ENCODE measurements at regions of chr2 and their contacts with region 1.

Region 1: GRCh38 chr2:168118733-168119514 is 128.5 kb downstream of the STK39 start:
- DNase-seq: peak in 4 of 5 donors; percentile 28 to 37 (median 36)
- H3K4me3 ChIP-seq: no peak overlapping the region
- H3K4me3 Mint-ChIP-seq: no peak overlapping the region
- H3K27ac ChIP-seq: no peak overlapping the region
- H3K27ac Mint-ChIP-seq: no peak overlapping the region
- H3K4me1 ChIP-seq: no peaks in the 10 kb centered on the region
- H3K4me1 Mint-ChIP-seq: peaks cover 0 to 2% (median 0%) of the 10 kb centered on the region in 4 donors
- H3K27me3 ChIP-seq: no peaks in the 10 kb centered on the region
- H3K27me3 Mint-ChIP-seq: no peaks in the 10 kb centered on the region

Region 2: DNA sequence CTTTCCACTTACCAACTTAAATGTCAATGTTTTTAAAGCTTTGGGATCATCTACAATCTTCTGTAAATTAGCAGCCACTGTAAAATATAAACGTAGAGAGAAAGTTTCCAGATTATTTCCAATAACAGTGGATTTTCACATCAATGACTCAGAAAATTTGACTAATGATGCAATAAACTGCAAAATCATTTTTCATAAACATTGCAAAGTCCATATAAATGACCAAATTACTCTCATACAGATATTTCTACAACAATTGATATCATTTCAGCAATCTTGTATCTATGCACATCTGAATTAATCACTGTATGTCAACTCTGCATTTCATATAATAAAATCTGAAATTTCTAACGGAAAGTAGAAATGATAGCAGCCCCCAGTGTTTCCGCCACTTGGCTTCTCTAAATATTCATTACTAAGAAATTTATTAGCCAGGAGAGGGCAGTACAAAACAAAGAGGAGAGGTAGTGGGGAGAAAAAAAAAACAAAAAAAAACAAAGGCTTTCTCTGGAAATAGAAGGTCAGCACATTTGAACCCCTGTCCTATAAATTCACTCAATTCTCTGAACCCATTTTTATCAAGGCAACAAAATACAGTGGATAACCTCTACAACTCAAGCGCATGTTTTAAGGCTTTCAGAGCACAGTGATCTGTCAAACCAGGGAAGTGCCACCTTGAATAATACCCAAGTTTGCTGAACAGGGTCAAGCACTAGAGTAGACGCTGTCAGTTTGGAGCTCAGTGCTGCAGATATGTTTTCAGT is 154.1 kb before region 1 on chr2:
- CTCF ChIA-PET with region 1: interaction called, 21 read pairs
- POLR2A ChIA-PET with region 1: no interaction called
- intact Hi-C with region 1: no loop called
- DNase-seq: no peak
- H3K4me3 ChIP-seq: no peak overlapping the region
- H3K4me3 Mint-ChIP-seq: no peak overlapping the region
- H3K27ac ChIP-seq: no peak overlapping the region
- H3K27ac Mint-ChIP-seq: no peak overlapping the region
- H3K4me1 ChIP-seq: no peaks in the 10 kb centered on the region
- H3K4me1 Mint-ChIP-seq: peaks cover 0 to 7% (median 2%) of the 10 kb centered on the region in 4 donors
- H3K27me3 ChIP-seq: no peaks in the 10 kb centered on the region
- H3K27me3 Mint-ChIP-seq: no peaks in the 10 kb centered on the region

Region 3: GRCh38 chr2:168097431-168097830 is 21.5 kb before region 1 on chr2:
- CTCF ChIA-PET with region 1: interaction called, 12 read pairs
- POLR2A ChIA-PET with region 1: no interaction called
- intact Hi-C with region 1: no loop called
- DNase-seq: no peak
- H3K4me3 ChIP-seq: no peak overlapping the region
- H3K4me3 Mint-ChIP-seq: no peak overlapping the region
- H3K27ac ChIP-seq: no peak overlapping the region
- H3K27ac Mint-ChIP-seq: no peak overlapping the region
- H3K4me1 ChIP-seq: no peaks in the 10 kb centered on the region
- H3K4me1 Mint-ChIP-seq: peaks cover 0 to 3% (median 0%) of the 10 kb centered on the region in 4 donors
- H3K27me3 ChIP-seq: no peaks in the 10 kb centered on the region
- H3K27me3 Mint-ChIP-seq: no peaks in the 10 kb centered on the region

Region 4: DNA sequence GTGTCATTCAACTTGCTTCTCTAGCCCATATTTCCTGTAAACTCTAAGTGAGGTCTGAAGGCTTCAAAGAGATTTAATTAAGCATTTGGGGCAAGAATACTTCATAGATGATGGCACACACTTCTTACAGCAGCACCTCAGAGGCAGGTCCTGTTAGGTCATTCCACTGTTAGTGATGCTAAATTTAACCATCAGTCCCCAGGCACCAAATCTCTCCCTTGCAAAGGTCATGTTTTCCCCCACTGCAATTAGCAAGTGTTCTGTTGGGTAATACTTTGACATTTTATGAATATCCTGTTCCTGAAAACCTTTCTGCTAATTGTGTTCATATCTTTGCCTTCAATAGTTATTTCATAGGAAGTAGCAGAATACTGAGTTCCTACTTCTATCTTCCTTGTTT is 11.4 kb after region 1 on chr2:
- CTCF ChIA-PET with region 1: interaction called, 53 read pairs
- POLR2A ChIA-PET with region 1: no interaction called
- intact Hi-C with region 1: no loop called
- DNase-seq: no peak
- H3K4me3 ChIP-seq: no peak overlapping the region
- H3K4me3 Mint-ChIP-seq: no peak overlapping the region
- H3K27ac ChIP-seq: no peak overlapping the region
- H3K27ac Mint-ChIP-seq: peak overlapping the region in 2 of 7 donors; percentile 42 to 61
- H3K4me1 ChIP-seq: no peaks in the 10 kb centered on the region
- H3K4me1 Mint-ChIP-seq: peaks cover 0 to 9% (median 6%) of the 10 kb centered on the region in 4 donors
- H3K27me3 ChIP-seq: no peaks in the 10 kb centered on the region
- H3K27me3 Mint-ChIP-seq: no peaks in the 10 kb centered on the region

Region 5: GRCh38 chr2:168160897-168161296 is 42.0 kb after region 1 on chr2:
- CTCF ChIA-PET with region 1: interaction called, 13 read pairs
- POLR2A ChIA-PET with region 1: no interaction called
- intact Hi-C with region 1: no loop called
- DNase-seq: peak in 3 of 5 donors; percentile 11 to 17 (median 14)
- H3K4me3 ChIP-seq: no peak overlapping the region
- H3K4me3 Mint-ChIP-seq: no peak overlapping the region
- H3K27ac ChIP-seq: no peak overlapping the region
- H3K27ac Mint-ChIP-seq: peak overlapping the region in 2 of 7 donors; percentile 29 to 56
- H3K4me1 ChIP-seq: peaks cover 11% of the 10 kb centered on the region
- H3K4me1 Mint-ChIP-seq: peaks cover 17 to 34% (median 28%) of the 10 kb centered on the region in 4 donors
- H3K27me3 ChIP-seq: no peaks in the 10 kb centered on the region
- H3K27me3 Mint-ChIP-seq: no peaks in the 10 kb centered on the region

Region 6: GRCh38 chr2:168545439-168546082 is 426.6 kb after region 1 on chr2:
- CTCF ChIA-PET with region 1: no interaction called
- POLR2A ChIA-PET with region 1: no interaction called
- intact Hi-C with region 1: no loop called
- DNase-seq: no peak
- H3K4me3 ChIP-seq: no peak overlapping the region
- H3K4me3 Mint-ChIP-seq: no peak overlapping the region
- H3K27ac ChIP-seq: no peak overlapping the region
- H3K27ac Mint-ChIP-seq: no peak overlapping the region
- H3K4me1 ChIP-seq: peaks cover 9% of the 10 kb centered on the region
- H3K4me1 Mint-ChIP-seq: peaks cover 16 to 43% (median 23%) of the 10 kb centered on the region in 4 donors
- H3K27me3 ChIP-seq: no peaks in the 10 kb centered on the region
- H3K27me3 Mint-ChIP-seq: no peaks in the 10 kb centered on the region

Measured in CD4-positive, alpha-beta memory T cell (primary cell).